AG04449 (cell line): ENCODE measurements at regions of chr20 and their contacts with region 1.

Region 1: GRCh38 chr20:51966291-51966971 is 164.1 kb upstream of the SALL4 start:
- DNase-seq: no peak
- H3K4me3 ChIP-seq: no peak overlapping the region
- CTCF ChIP-seq: peak; percentile 68

Region 2: DNA sequence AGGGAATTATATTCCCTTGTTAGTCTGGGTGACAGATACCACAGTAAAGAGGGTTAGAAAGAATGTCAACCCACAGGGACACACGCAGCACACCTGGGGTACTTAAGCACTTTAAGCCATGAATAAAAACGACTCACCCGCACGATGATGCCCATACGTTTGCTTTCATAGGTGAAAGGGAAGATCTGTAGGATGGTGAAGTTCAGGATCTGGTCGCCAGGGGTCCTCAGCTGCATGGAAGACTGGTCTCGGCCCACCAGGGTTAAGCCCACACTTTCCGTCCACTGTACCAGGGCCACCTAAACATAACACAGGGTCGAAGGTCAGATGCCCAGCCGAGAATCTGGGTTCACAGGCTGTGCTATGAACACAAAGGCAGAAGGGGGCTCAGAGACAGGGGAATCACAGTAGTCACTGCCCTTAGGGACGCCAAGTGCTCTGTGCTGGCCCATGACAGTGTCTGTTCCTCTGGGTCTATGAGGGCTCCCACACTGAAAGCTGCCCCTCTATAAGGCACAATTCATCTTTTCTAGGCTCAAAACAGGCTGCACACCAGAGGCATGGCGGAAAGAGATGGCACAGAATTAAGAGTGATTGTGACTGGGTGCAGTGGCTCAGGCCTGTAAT is 327.1 kb before region 1 on chr20:
- CTCF ChIA-PET with region 1: interaction called, 10 read pairs
- POLR2A ChIA-PET with region 1: no interaction called
- DNase-seq: no peak
- H3K4me3 ChIP-seq: no peak overlapping the region
- CTCF ChIP-seq: peak; percentile 88

Region 3: DNA sequence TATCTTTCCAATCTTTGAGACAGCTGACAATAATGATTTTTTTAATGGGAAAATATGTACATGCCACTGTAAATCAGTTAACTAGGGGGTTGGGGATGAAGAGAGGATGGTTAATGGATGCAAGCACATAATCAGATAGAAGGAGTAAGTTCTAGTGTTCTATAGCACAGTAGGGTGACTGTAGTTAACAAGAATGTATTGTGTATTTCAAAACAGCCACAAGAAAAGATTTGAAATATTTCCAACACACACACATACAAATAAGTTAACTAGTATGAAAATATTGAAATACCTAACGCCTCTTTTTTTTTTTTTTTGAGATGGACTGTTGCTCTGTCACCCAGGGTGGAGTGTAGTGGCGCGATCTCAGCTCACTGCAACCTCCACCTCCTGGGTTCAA is 10.7 kb before region 1 on chr20:
- CTCF ChIA-PET with region 1: interaction called, 16 read pairs
- POLR2A ChIA-PET with region 1: no interaction called
- DNase-seq: peak; percentile 41
- H3K4me3 ChIP-seq: no peak overlapping the region
- CTCF ChIP-seq: no peak

Region 4: DNA sequence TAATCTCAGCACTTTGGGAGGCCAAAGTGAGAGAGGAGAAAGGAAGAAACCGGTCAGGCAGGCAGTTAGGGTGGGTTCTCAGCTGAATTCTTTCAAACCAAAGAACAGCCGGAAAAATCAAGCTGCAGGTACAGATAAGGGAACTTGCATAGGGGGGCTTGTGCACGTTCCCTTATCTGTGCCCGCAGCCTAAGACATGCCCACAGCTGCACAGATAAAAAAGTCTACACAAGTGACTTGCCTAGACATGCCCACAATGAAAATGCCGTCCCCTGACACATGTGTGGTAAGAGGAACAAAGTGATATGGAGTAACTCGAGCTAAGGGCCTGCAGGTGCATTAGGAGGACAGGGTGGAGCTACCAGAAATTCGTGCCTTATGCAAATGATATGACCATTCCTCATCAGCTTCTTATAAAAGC is 11.7 kb after region 1 on chr20:
- CTCF ChIA-PET with region 1: interaction called, 40 read pairs
- POLR2A ChIA-PET with region 1: no interaction called
- DNase-seq: no peak
- H3K4me3 ChIP-seq: no peak overlapping the region
- CTCF ChIP-seq: no peak

Region 5: GRCh38 chr20:51984931-51985415 is 18.5 kb after region 1 on chr20:
- CTCF ChIA-PET with region 1: interaction called, 16 read pairs
- POLR2A ChIA-PET with region 1: no interaction called
- DNase-seq: peak; percentile 94
- H3K4me3 ChIP-seq: no peak overlapping the region
- CTCF ChIP-seq: no peak